ENCODE measurements at regions of chr11 and their contacts with region 1.

Region 1: GRCh38 chr11:124793466-124794278 is 6.5 kb downstream of the MSANTD2 start:
- DNase-seq: no peak
- ATAC-seq: peak; percentile 80
- H3K4me3 ChIP-seq: no peak overlapping the region
- H3K27ac ChIP-seq: no peak overlapping the region
- H3K4me1 ChIP-seq: peaks cover 16% of the 10 kb centered on the region
- H3K27me3 ChIP-seq: no peaks in the 10 kb centered on the region
- CTCF ChIP-seq: peak; percentile 65 to 72 (median 70)
- EP300 ChIP-seq: no peak
- POLR2A ChIP-seq: no peak
- RAD21 ChIP-seq: peak; percentile 68

Region 2: DNA sequence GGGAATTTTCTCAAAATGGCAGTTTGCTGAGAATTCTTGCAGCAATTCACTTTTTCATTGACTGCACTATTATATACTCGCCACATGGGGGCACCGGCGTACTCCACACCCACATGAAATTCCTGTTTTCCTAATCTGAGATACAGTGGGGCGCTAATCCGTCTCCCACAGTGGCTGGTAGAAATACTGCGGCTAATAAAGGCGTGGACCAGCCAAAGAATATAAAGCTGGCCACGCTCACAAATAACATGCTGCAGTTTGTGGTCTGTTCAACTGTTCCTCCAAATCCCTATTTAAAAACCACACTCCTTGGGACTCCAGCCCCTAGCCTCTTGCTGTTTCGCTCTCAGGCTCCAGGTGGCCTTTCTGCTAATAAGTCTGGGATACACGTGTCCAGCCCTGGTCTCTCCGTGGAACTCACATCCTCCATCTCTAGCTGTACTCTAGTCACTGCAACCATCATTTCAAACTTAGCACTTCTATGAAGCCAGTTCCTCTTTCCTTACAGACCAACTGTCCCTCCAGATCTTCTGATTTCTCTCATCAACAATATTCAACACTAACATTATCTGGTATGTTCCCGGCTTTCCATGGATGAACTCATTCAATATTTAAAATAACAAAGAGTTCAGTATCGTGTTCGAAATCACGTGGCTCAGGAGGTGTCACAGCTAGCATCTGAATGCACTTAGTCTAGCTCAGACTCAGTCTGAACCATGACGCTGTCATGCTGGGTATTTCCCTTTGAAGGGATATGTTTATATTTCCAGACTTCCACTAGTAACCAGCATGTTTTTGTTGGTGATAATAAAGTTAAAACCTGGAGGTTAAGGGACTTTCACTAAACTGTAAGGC is 149.0 kb before region 1 on chr11:
- CTCF ChIA-PET with region 1: interaction called, 52 read pairs
- POLR2A ChIA-PET with region 1: no interaction called
- RAD21 ChIA-PET with region 1: interaction called, 3 read pairs
- SMC1A ChIA-PET with region 1: interaction called, 10 read pairs
- in situ Hi-C with region 1: no loop called
- intact Hi-C with region 1: no loop called
- DNase-seq: no peak
- ATAC-seq: peak; percentile 71
- H3K4me3 ChIP-seq: no peak overlapping the region
- H3K27ac ChIP-seq: no peak overlapping the region
- H3K4me1 ChIP-seq: no peaks in the 10 kb centered on the region; the same call in 1 of the 2 replicates
- H3K27me3 ChIP-seq: no peaks in the 10 kb centered on the region
- CTCF ChIP-seq: peak; percentile 72 to 89 (median 77)
- EP300 ChIP-seq: no peak
- POLR2A ChIP-seq: no peak
- RAD21 ChIP-seq: peak; percentile 77

Region 3: GRCh38 chr11:124746621-124747243 is 46.9 kb before region 1 on chr11:
- CTCF ChIA-PET with region 1: interaction called, 31 read pairs
- POLR2A ChIA-PET with region 1: no interaction called
- RAD21 ChIA-PET with region 1: interaction called, 11 read pairs
- SMC1A ChIA-PET with region 1: interaction called, 9 read pairs
- in situ Hi-C with region 1: no loop called
- intact Hi-C with region 1: no loop called
- DNase-seq: peak; percentile 53
- ATAC-seq: peak; percentile 94
- H3K4me3 ChIP-seq: peak overlapping the region; percentile 88
- H3K27ac ChIP-seq: peak overlapping the region; percentile 53; the same call in 1 of the 2 replicates
- H3K4me1 ChIP-seq: peaks cover 4% of the 10 kb centered on the region; the same call in 1 of the 2 replicates
- H3K27me3 ChIP-seq: no peaks in the 10 kb centered on the region
- CTCF ChIP-seq: peak; percentile 66 to 79 (median 78)
- EP300 ChIP-seq: no peak
- POLR2A ChIP-seq: peak; percentile 70
- RAD21 ChIP-seq: peak; percentile 47

Region 4: GRCh38 chr11:124758317-124759203 is 35.1 kb before region 1 on chr11:
- CTCF ChIA-PET with region 1: interaction called, 272 read pairs
- POLR2A ChIA-PET with region 1: interaction called, 9 read pairs
- RAD21 ChIA-PET with region 1: interaction called, 35 read pairs
- SMC1A ChIA-PET with region 1: interaction called, 40 read pairs
- in situ Hi-C with region 1: no loop called
- intact Hi-C with region 1: loop called (anchors 2 kb)
- DNase-seq: no peak
- ATAC-seq: peak; percentile 75
- H3K4me3 ChIP-seq: peak overlapping the region; percentile 83
- H3K27ac ChIP-seq: 0 out of 2 replicates have a peak overlapping the region, but pooled peaks have one; percentile 10
- H3K4me1 ChIP-seq: peaks cover 18% of the 10 kb centered on the region
- H3K27me3 ChIP-seq: no peaks in the 10 kb centered on the region
- CTCF ChIP-seq: peak; percentile 88 to 89 (median 89)
- EP300 ChIP-seq: no peak
- POLR2A ChIP-seq: 0 out of 2 replicates have a peak, but pooled peaks have one; percentile 28
- RAD21 ChIP-seq: peak; percentile 57

Region 5: GRCh38 chr11:124778281-124778680 is 15.4 kb before region 1 on chr11:
- CTCF ChIA-PET with region 1: interaction called, 29 read pairs
- POLR2A ChIA-PET with region 1: interaction called, 3 read pairs
- RAD21 ChIA-PET with region 1: interaction called, 4 read pairs
- SMC1A ChIA-PET with region 1: interaction called, 6 read pairs
- in situ Hi-C with region 1: no loop called
- intact Hi-C with region 1: no loop called
- DNase-seq: no peak
- ATAC-seq: no peak
- H3K4me3 ChIP-seq: no peak overlapping the region
- H3K27ac ChIP-seq: no peak overlapping the region
- H3K4me1 ChIP-seq: no peaks in the 10 kb centered on the region
- H3K27me3 ChIP-seq: no peaks in the 10 kb centered on the region
- CTCF ChIP-seq: no peak
- EP300 ChIP-seq: no peak
- POLR2A ChIP-seq: no peak
- RAD21 ChIP-seq: no peak

Region 6: GRCh38 chr11:124837491-124837856 is 43.8 kb after region 1 on chr11:
- CTCF ChIA-PET with region 1: interaction called, 21 read pairs
- POLR2A ChIA-PET with region 1: no interaction called
- RAD21 ChIA-PET with region 1: interaction called, 9 read pairs
- SMC1A ChIA-PET with region 1: interaction called, 5 read pairs
- in situ Hi-C with region 1: no loop called
- intact Hi-C with region 1: no loop called
- DNase-seq: peak; percentile 2
- ATAC-seq: peak; percentile 67
- H3K4me3 ChIP-seq: no peak overlapping the region
- H3K27ac ChIP-seq: no peak overlapping the region
- H3K4me1 ChIP-seq: no peaks in the 10 kb centered on the region
- H3K27me3 ChIP-seq: peaks cover 16 to 17% of the 10 kb centered on the region in 2 experiments
- CTCF ChIP-seq: peak; percentile 41 to 60 (median 54)
- EP300 ChIP-seq: no peak
- POLR2A ChIP-seq: no peak
- RAD21 ChIP-seq: peak; percentile 46